ENCODE measurements at regions of chr2 and their contacts with region 1.

Region 1: GRCh38 chr2:106104332-106105062 is 89.6 kb downstream of the UXS1 start:
- DNase-seq: peak in 1 of 2 donors; percentile 81
- H3K4me3 ChIP-seq: no peak overlapping the region
- H3K27ac ChIP-seq: no peak overlapping the region
- H3K4me1 ChIP-seq: peaks cover 0 to 3% of the 10 kb centered on the region in 2 donors
- H3K27me3 ChIP-seq: no peaks in the 10 kb centered on the region
- CTCF ChIP-seq: peak; percentile 74 to 99 (median 93)

Region 2: DNA sequence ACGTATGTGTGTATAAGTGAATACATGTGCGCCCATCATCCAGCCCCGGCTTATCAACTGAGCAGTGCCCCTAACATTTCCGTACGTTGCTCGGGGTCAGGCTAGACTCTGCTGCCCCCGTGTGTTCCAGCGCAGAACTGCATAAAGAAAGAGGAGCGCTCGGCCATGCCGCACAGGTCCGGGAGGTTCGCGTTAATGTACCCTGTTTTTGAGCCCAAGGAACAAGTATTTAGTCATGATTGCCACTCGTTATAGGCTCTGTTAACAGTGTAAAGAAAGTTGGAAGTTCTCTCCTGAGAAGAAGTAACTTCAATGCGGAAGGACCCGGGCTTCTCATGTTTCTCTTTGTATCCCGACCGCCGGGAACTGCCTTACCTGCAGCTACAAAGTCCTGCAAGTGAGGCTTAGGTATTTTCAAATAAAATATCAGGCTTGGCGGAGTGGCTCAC is 438.3 kb after region 1 on chr2:
- intact Hi-C with region 1: loop called (anchors 1 kb)
- DNase-seq: peak in 1 of 2 donors; percentile 77
- H3K4me3 ChIP-seq: peak overlapping the region in 1 of 2 donors; percentile 39
- H3K27ac ChIP-seq: no peak overlapping the region
- H3K4me1 ChIP-seq: no peaks in the 10 kb centered on the region
- H3K27me3 ChIP-seq: no peaks in the 10 kb centered on the region
- CTCF ChIP-seq: peak; percentile 62 to 96 (median 95)